ENCODE measurements at regions of chr7 and their contacts with region 1.

Region 1: GRCh38 chr7:103573479-103574058 is 127.6 kb upstream of the SLC26A5 start:
- DNase-seq: peak; percentile 59
- ATAC-seq: no peak
- H3K4me3 ChIP-seq: no peak overlapping the region
- H3K27ac ChIP-seq: no peak overlapping the region
- H3K4me1 ChIP-seq: peaks cover 14% of the 10 kb centered on the region
- H3K27me3 ChIP-seq: no peaks in the 10 kb centered on the region
- CTCF ChIP-seq: peak; percentile 66
- POLR2A ChIP-seq: no peak
- RAD21 ChIP-seq: peak; percentile 69

Region 2: DNA sequence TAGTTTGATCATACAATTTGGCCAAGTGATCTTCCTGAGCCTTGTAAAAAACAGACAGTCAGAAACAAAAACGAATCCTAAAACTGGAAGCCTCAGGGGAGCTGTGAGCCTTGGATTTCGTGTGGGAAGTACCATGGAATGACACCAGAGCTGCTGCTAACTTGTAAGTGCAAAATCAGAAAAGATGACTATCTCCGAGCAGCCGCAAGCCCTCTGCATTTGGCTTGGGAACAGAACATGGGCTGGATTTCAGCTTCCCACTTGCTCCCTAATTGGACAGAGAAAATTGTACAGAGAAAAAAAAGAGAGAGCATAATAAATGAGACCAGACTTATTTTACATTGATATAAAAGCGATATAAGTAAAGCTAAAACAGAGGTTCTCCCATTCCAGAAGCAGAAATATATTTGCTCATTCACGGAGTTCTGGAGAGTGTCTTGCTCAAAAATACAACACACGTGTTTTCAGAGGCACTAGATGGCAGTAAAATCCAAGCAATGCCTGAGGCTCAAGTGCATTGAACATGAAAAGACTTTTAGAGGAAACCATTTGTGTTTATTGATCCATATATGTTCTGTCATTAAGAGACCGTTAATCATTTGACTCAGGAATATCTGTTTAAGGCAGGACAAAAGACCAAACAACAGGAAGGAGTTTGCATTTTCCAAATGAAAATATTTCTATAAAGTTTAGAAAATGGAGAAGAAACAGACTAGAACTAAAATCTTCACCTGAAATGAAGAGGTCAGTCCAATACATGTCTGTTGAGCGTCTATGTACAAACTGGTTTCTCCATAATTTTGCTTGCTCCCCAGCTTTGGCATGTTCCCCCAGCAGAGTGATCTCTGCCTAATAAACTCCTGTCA is 49.3 kb before region 1 on chr7:
- CTCF ChIA-PET with region 1: interaction called, 3 read pairs
- POLR2A ChIA-PET with region 1: no interaction called
- dilution Hi-C with region 1: no loop called
- in situ Hi-C with region 1: no loop called
- intact Hi-C with region 1: loop called (anchors 2 kb)
- DNase-seq: peak; percentile 68
- ATAC-seq: peak; percentile 55; the same call in 1 of the 2 replicates
- H3K4me3 ChIP-seq: no peak overlapping the region
- H3K27ac ChIP-seq: no peak overlapping the region
- H3K4me1 ChIP-seq: 0 out of 2 replicates have a peak, but pooled peaks cover 2% of the 10 kb centered on the region
- H3K27me3 ChIP-seq: no peaks in the 10 kb centered on the region; the same call in 1 of the 2 replicates
- CTCF ChIP-seq: peak; percentile 74
- POLR2A ChIP-seq: 0 out of 2 replicates have a peak, but pooled peaks have one; percentile 26
- RAD21 ChIP-seq: peak; percentile 93

Region 3: GRCh38 chr7:103989785-103990767 is 416.5 kb after region 1 on chr7:
- CTCF ChIA-PET with region 1: interaction called, 6 read pairs
- POLR2A ChIA-PET with region 1: no interaction called
- dilution Hi-C with region 1: no loop called
- in situ Hi-C with region 1: no loop called
- intact Hi-C with region 1: loop called (anchors 2 kb)
- DNase-seq: peak; percentile 47
- ATAC-seq: peak; percentile 65
- H3K4me3 ChIP-seq: peak overlapping the region; percentile 78
- H3K27ac ChIP-seq: peak overlapping the region; percentile 66
- H3K4me1 ChIP-seq: peaks cover 5% of the 10 kb centered on the region; the same call in 1 of the 2 replicates
- H3K27me3 ChIP-seq: no peaks in the 10 kb centered on the region; the same call in 1 of the 2 replicates
- CTCF ChIP-seq: 0 out of 2 replicates have a peak, but pooled peaks have one; percentile 5
- POLR2A ChIP-seq: no peak
- RAD21 ChIP-seq: no peak

Region 4: GRCh38 chr7:104040666-104041065 is 467.1 kb after region 1 on chr7:
- CTCF ChIA-PET with region 1: no interaction called
- POLR2A ChIA-PET with region 1: no interaction called
- dilution Hi-C with region 1: no loop called
- in situ Hi-C with region 1: no loop called
- intact Hi-C with region 1: no loop called
- DNase-seq: no peak
- ATAC-seq: no peak
- H3K4me3 ChIP-seq: no peak overlapping the region
- H3K27ac ChIP-seq: no peak overlapping the region
- H3K4me1 ChIP-seq: no peaks in the 10 kb centered on the region
- H3K27me3 ChIP-seq: no peaks in the 10 kb centered on the region
- CTCF ChIP-seq: no peak
- POLR2A ChIP-seq: no peak
- RAD21 ChIP-seq: no peak

Region 5: GRCh38 chr7:104156842-104157277 is 583.3 kb after region 1 on chr7:
- CTCF ChIA-PET with region 1: interaction called, 4 read pairs
- POLR2A ChIA-PET with region 1: no interaction called
- dilution Hi-C with region 1: no loop called
- in situ Hi-C with region 1: loop called (anchors 5 kb)
- intact Hi-C with region 1: loop called (anchors 1 kb)
- DNase-seq: peak; percentile 57
- ATAC-seq: no peak
- H3K4me3 ChIP-seq: no peak overlapping the region
- H3K27ac ChIP-seq: no peak overlapping the region
- H3K4me1 ChIP-seq: no peaks in the 10 kb centered on the region
- H3K27me3 ChIP-seq: no peaks in the 10 kb centered on the region
- CTCF ChIP-seq: peak; percentile 70
- POLR2A ChIP-seq: no peak
- RAD21 ChIP-seq: peak; percentile 72

Measured in IMR-90 (cell line).